Ascending aorta (tissue), 2 donors: ENCODE measurements at regions of chr17 and their contacts with region 1.

Region 1: DNA sequence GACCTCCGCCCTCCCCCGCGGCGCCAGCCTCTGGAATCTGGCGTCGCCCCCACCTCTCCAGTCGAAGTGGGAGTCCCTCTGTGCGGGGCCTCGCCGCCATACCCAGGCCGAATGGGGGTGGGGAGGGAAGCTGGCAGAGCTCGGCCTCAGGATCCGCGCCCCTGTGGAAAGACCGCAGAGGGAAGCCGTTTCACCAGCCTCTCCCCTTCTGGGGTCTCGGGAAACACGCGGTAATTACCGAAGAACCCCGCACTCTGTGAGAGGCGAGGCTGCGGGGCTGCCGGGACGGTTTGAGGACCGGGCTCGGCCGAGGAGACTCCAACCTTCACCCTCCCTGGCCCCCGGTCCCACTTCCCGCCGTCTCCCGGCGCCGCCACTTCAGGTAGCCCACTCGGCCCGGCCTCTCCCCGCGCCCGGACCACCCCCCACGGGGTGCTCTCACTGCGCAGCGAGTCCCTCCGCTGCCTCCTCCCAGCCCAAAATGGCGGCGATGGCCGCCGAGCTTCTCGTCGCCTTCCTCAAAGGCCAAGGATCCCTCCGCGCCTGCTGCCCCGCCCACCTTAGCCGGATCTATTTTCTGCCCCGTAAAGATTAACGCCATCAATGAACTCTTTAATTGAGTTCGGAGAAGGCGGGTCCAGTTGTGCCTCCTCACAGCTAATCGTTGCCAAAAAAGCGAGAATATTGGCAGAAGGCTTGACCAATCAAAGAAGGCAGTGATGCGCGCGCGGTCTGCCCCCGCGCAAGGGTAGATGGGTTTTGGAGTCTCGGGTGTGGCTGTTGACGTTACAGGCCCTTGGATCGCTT is 453 bp upstream of the HEXIM2 start:
- DNase-seq: peak; percentile 98 to 100
- H3K4me3 ChIP-seq: peak overlapping the region; percentile 81 to 90
- H3K27ac ChIP-seq: peak overlapping the region; percentile 98 to 100
- H3K4me1 ChIP-seq: peaks cover 12 to 42% of the 10 kb centered on the region in 2 donors
- H3K27me3 ChIP-seq: no peaks in the 10 kb centered on the region
- CTCF ChIP-seq: peak in 1 of 3 experiments; percentile 34

Region 2: DNA sequence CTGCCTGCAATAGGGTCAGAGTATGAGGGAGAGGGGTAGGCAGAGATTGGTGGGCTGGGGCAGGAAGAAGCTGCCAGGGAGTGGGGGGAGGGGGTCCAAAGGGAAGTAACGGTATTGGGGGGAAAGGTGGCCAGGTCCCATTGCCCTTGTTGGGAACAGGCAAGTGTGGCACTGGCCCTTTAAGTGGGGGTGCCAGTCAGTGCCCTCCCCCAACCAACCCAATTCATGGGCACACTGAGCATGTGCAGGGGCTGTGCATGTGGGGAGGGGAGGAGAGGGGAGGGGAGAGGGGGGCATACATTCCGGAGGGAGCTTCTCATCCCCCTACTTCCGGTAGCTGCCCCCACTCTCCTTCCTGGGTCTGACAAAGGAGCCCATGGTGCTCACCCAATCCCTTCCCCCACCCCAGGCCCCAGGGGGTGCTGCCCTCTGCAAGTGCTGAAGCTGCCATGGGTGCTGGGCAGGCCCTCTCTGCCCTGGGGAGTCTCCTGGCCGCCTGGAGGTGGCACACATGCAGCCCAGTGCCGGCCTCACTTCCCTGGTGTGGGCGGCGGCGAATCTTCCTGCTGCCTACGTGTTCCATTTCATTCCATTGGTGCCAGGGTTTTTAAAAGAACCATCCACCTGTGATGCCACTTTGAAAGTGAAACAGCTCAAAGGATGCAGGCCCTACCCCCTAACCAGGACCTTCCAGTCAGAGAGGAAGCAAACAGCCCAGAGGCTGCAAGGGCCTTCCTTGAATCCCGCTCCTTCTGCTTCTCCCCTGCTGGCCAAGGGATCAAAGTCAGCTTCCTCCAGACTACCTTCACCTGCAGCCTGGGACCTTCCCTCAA is 11.4 kb after region 1 on chr17:
- intact Hi-C with region 1: loop called (anchors 1 kb)
- DNase-seq: peak; percentile 29 to 93
- H3K4me3 ChIP-seq: peak overlapping the region; percentile 59 to 68
- H3K27ac ChIP-seq: peak overlapping the region; percentile 95
- H3K4me1 ChIP-seq: peaks cover 3 to 28% of the 10 kb centered on the region in 2 donors
- H3K27me3 ChIP-seq: no peaks in the 10 kb centered on the region
- CTCF ChIP-seq: peak in 1 of 3 experiments; percentile 2